ENCODE measurements at regions of chr11 and their contacts with region 1.

Region 1: GRCh38 chr11:387193-387793 is 6.7 kb upstream of the PKP3 start:
- DNase-seq: no peak

Region 2: DNA sequence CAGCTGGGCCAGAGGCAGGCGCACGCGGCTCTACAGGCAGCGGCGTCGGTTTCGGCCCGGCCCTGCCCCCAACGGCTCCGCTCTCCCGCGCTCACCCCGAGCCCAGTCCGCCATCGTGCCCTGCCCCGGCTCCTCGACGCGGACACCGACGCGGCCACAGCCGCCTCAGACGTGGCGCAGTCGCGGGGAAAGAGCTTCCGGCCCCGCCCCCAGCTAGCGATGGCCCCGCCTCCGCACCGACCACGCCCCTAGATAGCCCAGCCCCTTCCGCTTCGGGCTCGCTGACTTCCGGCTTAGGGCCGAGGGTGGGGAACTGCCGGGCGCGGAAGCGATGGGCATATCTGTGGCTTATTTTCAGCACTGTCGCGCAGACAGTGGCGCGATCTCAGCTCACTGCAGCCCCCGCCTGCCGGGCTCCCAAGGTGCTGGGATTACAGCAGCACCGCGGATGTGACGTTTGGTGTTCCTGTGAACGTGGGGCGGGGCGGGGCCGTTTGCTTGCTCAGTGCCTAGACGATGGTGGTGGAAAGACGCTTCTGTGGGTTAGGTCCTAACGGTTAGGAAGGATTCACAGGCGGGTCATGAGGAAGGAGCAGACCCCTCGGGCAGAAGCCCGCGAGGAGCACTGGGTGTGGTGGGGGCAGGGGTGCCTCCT is 180.0 kb before region 1 on chr11 and contains the starts of genes BET1L and RIC8A:
- intact Hi-C with region 1: no loop called
- DNase-seq: peak; percentile 99
- total RNA-seq, gene BET1L: 37.5 to 39.1 TPM
- total RNA-seq, gene RIC8A: 73.8 to 87.5 TPM

Region 3: DNA sequence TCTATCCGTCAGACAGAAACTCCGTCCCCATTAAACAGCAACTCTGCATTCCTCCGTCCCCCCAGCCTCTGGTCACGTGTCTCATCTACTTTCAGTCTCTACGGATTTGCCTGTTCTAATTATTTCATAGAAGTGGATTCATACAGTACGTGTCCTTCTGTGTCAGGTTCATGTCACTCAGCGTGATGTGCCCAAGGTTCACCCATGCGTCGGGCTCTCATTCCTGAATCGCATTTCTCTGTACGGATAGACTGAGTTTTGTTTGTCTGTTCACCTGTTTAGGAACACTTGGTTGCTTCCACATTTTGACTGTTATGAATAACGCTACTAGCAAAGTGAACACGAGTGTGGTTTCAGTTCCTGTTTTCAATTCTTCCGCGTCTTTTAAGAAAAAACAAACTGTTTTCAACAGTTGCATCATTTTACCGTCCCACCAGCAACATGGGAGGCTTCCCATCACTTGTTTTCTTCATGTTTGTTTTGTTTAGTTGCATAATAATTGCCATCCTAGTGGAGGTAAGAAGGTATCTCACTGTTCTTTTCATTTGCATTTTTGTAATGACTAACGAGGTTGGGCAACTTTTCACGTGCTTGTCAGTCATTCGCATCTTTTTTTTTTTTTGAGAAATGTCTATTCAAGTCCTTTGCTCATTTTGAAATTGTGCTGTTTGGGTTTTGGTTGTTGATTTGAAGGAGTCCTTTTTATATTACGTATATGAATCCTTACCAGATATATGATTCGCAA is 118.0 kb before region 1 on chr11:
- intact Hi-C with region 1: loop called in 1 of 2 experiments (anchors 10 kb)
- DNase-seq: no peak

Region 4: GRCh38 chr11:355581-356458 is 31.5 kb before region 1 on chr11:
- intact Hi-C with region 1: no loop called
- DNase-seq: peak; percentile 98

Region 5: DNA sequence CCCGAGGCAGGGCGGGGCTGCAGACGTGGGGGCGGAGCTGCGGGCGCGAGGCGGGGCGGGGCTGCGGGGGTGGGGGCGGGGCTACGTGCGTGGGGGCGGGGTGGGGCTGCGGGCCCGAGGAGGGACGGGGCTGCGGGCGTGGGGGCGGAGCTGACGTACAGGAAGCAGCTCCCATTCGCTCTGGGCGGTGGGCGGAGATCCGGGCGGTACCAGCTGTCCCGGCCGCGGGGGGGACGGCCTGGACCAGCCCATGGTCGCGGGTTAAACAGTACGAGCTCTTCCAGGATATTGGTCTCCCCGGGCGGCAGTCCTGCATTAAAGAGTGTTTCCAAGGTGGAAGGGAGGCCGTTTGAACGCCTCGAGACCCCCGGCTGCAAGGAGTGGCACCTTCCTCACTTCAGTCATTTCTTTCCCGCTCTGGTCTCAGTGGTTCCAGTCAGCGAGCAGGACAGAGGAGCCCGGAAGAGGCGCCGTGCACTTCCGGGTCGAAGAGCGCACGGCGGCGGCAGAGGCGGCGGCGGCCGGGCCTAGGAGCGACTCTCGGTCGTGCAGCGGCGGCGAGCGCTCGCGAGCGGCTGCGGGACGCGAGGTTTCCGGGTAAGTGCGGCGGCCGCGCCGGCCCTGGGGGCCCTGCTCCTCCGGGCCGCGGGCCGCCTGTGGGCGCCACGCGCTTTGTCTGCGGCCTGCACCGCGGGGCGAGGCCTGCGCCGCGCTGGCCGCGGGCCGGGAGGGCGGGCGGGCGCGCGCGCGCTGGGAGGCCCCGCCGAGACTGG is 188.9 kb after region 1 on chr11 and contains the start of gene PHRF1:
- intact Hi-C with region 1: no loop called
- DNase-seq: peak; percentile 98
- total RNA-seq, gene PHRF1: 18.3 to 20.8 TPM

Measured in posterior vena cava (tissue), 2 donors.